RWPE1 (cell line): ENCODE measurements at regions of chr16 and their contacts with region 1.

Region 1: GRCh38 chr16:22751104-22751667 is 62.8 kb upstream of the HS3ST2 start:
- DNase-seq: no peak
- H3K27ac ChIP-seq: no peak overlapping the region
- CTCF ChIP-seq: no peak

Region 2: DNA sequence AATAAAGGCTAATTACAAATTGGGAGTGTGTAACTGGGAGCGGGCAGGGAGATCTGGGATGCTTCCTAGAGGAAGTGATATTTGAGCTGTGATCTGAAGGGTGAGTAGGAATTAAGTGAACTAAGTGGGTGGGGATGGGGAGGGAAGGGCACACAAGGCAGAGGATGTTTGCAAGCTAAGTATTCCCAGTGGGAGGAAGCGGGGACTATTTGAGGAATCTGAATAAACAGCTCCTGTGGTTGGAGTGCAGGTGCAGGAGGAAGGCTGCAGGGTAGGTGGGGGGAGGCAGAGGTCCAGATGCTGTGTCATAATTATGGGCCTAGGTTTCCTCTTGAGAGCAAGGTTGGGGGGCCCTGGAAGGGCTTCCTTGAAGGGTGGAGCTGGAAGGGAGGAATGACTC is 39.3 kb before region 1 on chr16:
- CTCF ChIA-PET with region 1: interaction called, 10 read pairs
- POLR2A ChIA-PET with region 1: no interaction called
- DNase-seq: no peak
- H3K27ac ChIP-seq: no peak overlapping the region
- CTCF ChIP-seq: no peak